ENCODE measurements at regions of chr5 and their contacts with region 1.

Region 1: DNA sequence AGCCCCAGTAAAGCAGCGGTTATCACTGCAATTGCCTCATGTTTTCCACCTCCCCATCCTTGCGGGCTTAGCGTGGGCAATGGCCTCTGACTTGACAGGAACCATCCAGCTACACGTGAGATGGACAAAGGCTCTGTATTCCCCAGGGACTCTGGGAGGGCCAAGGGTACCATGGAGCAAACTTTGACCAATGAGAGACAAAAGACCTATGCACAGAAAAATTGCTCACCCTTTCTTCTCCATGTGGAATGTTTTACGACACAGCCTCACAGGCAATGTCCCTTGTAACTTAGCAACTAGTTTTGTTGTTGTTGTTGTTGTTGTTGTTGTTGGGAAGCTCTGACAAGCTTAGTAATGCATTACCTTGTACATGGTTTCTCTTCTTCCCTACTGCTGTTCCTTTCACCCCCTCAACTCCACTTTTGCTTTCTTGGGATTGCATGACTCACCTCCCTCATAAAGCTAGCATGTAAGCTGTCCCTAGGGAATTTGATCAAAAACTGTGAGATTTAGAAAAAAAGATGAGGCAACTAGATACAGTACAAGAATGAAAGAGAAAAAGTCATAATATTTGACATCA is 550.9 kb downstream of the RAB3C start:
- DNase-seq: peak; percentile 37
- H3K4me3 ChIP-seq: no peak overlapping the region
- H3K27ac ChIP-seq: no peak overlapping the region
- H3K4me1 ChIP-seq: peaks cover 6% of the 10 kb centered on the region
- H3K27me3 ChIP-seq: no peaks in the 10 kb centered on the region
- CTCF ChIP-seq: no peak

Region 2: DNA sequence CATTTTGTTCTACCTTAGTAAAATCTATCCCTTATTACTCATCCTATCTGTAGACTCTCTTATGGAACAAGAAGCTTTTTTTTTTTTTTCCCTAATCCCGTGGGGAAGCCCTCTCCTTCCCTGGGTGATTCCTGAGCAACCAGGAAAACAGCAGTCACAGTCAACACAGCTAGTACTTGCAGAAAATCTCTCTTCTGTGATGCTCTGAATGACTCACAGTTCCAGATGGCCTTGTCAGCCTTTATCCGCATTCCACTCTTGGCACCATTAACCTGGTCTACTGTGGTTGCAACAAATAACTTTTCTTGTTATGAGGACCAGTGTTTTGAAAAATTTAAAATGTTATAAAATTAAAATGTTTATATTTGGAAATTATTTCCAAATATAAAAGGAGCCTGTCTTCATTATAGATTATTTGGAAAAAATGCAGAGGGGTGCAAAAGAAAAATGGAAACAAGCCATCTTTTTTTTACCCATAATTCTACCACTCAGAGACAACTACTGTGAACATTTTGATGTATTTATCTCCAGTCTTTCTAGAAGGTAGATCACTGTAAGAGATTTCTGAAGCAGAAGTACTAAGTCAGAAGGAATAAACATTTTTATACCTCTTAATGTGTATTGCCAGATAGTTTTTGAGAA is 64.2 kb before region 1 on chr5:
- CTCF ChIA-PET with region 1: no interaction called
- dilution Hi-C with region 1: loop called (anchors 5 kb)
- in situ Hi-C with region 1: no loop called
- intact Hi-C with region 1: no loop called
- DNase-seq: peak; percentile 69
- H3K4me3 ChIP-seq: no peak overlapping the region
- H3K27ac ChIP-seq: no peak overlapping the region
- H3K4me1 ChIP-seq: peaks cover 6% of the 10 kb centered on the region
- H3K27me3 ChIP-seq: no peaks in the 10 kb centered on the region
- CTCF ChIP-seq: no peak

Measured in mammary epithelial cell (primary cell).